ENCODE measurements at regions of chr7 and their contacts with region 1.

Region 1: DNA sequence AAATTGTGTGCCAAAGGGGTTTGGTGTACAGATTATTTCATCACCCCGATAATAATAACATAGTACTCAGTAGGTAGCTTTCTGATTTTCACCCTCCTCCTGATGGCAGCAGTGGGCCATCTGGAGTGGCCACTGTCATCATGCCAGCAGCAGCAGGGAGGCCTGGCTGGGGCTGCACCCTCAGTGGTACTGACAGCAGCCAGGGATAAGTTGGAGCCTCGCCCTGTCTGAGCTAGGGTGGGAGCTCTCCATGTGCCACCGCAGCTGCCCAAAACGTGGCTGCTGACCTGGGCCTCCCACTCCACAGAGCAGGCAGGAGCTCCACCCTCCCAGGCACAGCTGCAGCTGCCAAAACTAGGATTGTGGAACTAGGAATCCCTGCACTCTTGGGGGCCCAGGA is 700.8 kb upstream of the KCND2 start:
- DNase-seq: no peak
- H3K4me3 ChIP-seq: no peak overlapping the region
- H3K27ac ChIP-seq: no peak overlapping the region
- H3K4me1 ChIP-seq: no peaks in the 10 kb centered on the region
- H3K27me3 ChIP-seq: no peaks in the 10 kb centered on the region
- CTCF ChIP-seq: no peak
- POLR2A ChIP-seq: no peak

Region 2: DNA sequence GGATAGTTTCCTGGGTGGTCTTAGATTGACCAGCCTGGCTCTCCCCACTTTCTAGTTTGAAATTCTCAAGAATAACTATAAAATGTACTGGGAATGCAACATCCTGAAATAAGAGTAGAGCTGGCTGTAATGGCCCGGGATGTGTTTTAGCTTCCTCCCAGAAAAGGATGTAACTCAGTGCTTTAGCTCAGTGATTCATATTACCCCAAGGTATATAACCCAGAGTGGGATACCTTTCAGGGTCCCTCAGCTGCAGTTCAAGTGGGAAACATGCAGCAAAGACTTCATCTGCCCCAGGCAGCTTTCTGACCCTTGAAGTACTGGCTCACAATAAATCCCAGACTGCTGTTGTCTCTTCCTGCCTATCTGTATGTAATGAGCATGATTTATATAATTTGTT is 34.2 kb after region 1 on chr7:
- intact Hi-C with region 1: loop called (anchors 1 kb)
- DNase-seq: no peak
- H3K4me3 ChIP-seq: no peak overlapping the region
- H3K27ac ChIP-seq: no peak overlapping the region
- H3K4me1 ChIP-seq: no peaks in the 10 kb centered on the region
- H3K27me3 ChIP-seq: no peaks in the 10 kb centered on the region
- CTCF ChIP-seq: no peak
- POLR2A ChIP-seq: no peak

Region 3: GRCh38 chr7:121302214-121302745 is 1730.1 kb after region 1 on chr7:
- intact Hi-C with region 1: no loop called
- DNase-seq: no peak
- H3K4me3 ChIP-seq: no peak overlapping the region
- H3K27ac ChIP-seq: no peak overlapping the region
- H3K4me1 ChIP-seq: peaks cover 9% of the 10 kb centered on the region
- H3K27me3 ChIP-seq: no peaks in the 10 kb centered on the region
- CTCF ChIP-seq: no peak
- POLR2A ChIP-seq: no peak